Heart left ventricle (tissue), 16 donors: ENCODE measurements at regions of chr3 and their contacts with region 1.

Region 1: DNA sequence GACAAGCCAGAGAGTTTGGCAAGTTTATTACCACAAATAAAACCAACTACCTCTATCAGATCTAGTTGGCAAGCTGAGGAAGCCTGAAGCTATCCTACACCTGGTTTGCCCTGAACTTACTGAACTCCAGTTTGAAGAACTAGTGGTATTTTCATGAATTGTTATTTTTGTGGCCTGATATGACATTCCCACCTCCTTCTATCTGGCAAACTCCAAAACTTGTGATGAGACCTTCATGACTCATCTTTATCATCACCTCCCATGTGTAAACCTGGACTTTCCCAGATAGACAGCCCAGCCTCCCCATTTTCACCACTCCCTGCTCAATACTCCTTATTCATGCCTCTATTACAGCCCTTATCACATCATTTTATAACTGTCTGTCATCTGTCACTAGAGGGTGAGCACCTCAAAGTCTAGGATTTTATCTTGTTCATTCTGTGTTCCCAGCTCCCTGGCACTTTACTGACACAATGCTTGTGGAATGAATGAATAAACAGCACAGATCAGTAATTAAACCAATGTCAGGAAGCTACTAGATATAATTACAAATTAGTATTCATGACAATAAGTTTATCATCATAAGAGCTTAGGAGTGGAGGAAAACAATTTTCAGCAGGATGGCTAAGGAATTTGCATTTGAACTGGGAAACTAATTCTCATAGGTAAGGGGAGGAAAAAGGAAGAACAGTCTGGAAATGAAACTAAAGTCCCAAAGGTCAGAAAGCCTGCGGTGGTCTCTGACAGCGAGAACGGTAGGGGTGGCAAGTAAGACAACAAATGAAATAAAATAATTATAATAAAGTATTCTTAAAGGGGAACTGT is 13.2 kb upstream of the TRANK1 start:
- DNase-seq: no peak
- ATAC-seq: peak in 1 of 4 donors; percentile 26
- H3K4me3 ChIP-seq: no peak overlapping the region
- H3K27ac ChIP-seq: no peak overlapping the region
- H3K4me1 ChIP-seq: peaks cover 0 to 12% (median 6%) of the 10 kb centered on the region in 12 donors
- H3K27me3 ChIP-seq: no peaks in the 10 kb centered on the region
- CTCF ChIP-seq: no peak
- POLR2A ChIP-seq: no peak

Region 2: GRCh38 chr3:36729204-36730056 is 228.6 kb before region 1 on chr3:
- intact Hi-C with region 1: loop called (anchors 1 to 5 kb)
- DNase-seq: no peak
- ATAC-seq: peak in 2 of 4 donors; percentile 61 to 80
- H3K4me3 ChIP-seq: no peak overlapping the region
- H3K27ac ChIP-seq: no peak overlapping the region
- H3K4me1 ChIP-seq: peaks cover 0 to 19% (median 7%) of the 10 kb centered on the region in 12 donors
- H3K27me3 ChIP-seq: no peaks in the 10 kb centered on the region
- CTCF ChIP-seq: peak; percentile 61 to 86 (median 79)
- POLR2A ChIP-seq: no peak

Region 3: DNA sequence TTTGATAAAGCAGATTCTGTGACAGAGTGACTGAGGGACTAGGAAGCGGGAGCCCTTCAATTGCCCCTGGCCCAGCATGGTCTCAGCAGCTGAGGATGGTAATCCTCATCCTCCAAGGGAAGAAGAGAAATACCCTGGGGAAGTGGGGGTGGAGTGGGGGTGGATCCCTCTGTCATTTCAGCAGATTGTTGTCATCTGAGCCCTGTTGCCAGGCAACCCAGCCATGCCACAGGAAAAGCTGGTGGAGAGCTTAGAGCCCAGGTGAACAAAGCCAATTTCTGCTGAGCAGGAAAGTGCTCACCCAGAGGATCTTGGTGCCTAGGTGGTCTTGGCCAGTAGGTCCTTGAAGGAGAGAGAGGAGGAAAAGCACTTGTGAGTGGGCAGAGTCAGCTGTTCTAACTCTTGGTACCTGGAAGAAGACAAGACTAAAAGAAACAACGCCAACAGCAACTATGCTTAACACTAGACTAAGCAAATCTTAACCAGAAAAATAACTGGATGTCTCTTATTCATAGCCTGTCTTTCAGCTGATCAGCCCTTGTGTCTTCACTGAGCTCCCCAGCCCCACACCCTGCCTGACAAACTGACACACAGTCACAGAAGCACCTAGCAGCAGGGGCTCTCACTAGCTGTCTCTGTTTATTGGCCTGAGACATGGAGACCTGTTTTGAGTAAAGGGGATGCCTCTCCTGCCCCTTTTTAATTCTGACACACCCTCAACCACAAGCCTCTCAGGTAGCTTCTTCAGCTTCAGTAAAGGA is 153.6 kb before region 1 on chr3:
- intact Hi-C with region 1: no loop called
- DNase-seq: no peak
- ATAC-seq: no peak
- H3K4me3 ChIP-seq: no peak overlapping the region
- H3K27ac ChIP-seq: no peak overlapping the region
- H3K4me1 ChIP-seq: no peaks in the 10 kb centered on the region
- H3K27me3 ChIP-seq: peaks cover 0 to 2% (median 0%) of the 10 kb centered on the region in 9 donors
- CTCF ChIP-seq: no peak
- POLR2A ChIP-seq: no peak

Region 4: GRCh38 chr3:36868614-36869436 is 89.2 kb before region 1 on chr3:
- intact Hi-C with region 1: loop called in 1 of 10 experiments (anchors 5 kb)
- DNase-seq: peak in 2 of 5 donors; percentile 38 to 60
- ATAC-seq: peak in 3 of 4 donors; percentile 69 to 87 (median 79)
- H3K4me3 ChIP-seq: no peak overlapping the region
- H3K27ac ChIP-seq: no peak overlapping the region
- H3K4me1 ChIP-seq: peaks cover 0 to 14% (median 0%) of the 10 kb centered on the region in 12 donors
- H3K27me3 ChIP-seq: no peaks in the 10 kb centered on the region
- CTCF ChIP-seq: peak; percentile 69 to 94 (median 78)
- POLR2A ChIP-seq: no peak

Region 5: GRCh38 chr3:36907911-36908646 is 50.0 kb before region 1 on chr3:
- intact Hi-C with region 1: loop called in 8 of 10 experiments (anchors 2 to 5 kb)
- DNase-seq: peak; percentile 37 to 67 (median 51)
- ATAC-seq: peak; percentile 54 to 82 (median 76)
- H3K4me3 ChIP-seq: peak overlapping the region; percentile 12 to 74 (median 57)
- H3K27ac ChIP-seq: peak overlapping the region; percentile 0 to 95 (median 72)
- H3K4me1 ChIP-seq: peaks cover 0 to 62% (median 8%) of the 10 kb centered on the region in 12 donors
- H3K27me3 ChIP-seq: no peaks in the 10 kb centered on the region
- CTCF ChIP-seq: no peak
- POLR2A ChIP-seq: no peak

Region 6: GRCh38 chr3:36918050-36918449 is 40.0 kb before region 1 on chr3:
- intact Hi-C with region 1: loop called in 1 of 10 experiments (anchors 5 kb)
- DNase-seq: no peak
- ATAC-seq: no peak
- H3K4me3 ChIP-seq: no peak overlapping the region
- H3K27ac ChIP-seq: peak overlapping the region in 1 of 12 donors; percentile 59
- H3K4me1 ChIP-seq: peaks cover 0 to 21% (median 6%) of the 10 kb centered on the region in 12 donors
- H3K27me3 ChIP-seq: no peaks in the 10 kb centered on the region
- CTCF ChIP-seq: no peak
- POLR2A ChIP-seq: no peak